AG04449 (cell line): ENCODE measurements at regions of chr10 and their contacts with region 1.

Region 1: GRCh38 chr10:89793649-89794254 is 92.4 kb downstream of the KIF20B start:
- DNase-seq: peak; percentile 19
- H3K4me3 ChIP-seq: no peak overlapping the region
- CTCF ChIP-seq: peak; percentile 62

Region 2: DNA sequence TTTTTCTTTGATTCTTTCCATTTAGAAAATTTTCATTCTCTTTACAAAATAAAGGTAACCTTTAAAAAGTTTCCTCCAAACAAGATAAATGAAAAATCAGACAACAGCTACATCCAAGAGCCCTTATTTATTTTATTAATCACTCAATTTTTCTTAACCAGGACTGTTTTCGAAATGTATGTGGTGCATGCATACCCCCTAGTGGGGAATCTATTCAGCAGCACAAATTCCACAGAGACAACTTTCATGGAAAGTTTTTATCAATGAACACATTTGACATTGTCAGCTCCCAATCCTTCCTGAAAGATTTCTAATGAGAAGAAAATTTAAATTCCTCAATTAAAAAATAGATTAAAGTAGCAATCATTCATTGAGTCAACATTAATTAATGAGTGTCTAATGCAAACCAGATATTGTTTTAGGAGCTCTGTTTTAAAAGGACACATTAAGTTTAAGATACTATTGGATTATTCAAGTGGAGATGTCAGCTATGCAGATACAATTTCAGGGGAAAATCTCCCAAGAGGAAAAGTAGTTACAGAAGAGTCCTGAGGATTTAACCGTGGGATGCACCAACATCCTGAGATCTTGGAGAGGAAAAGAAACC is 1069.3 kb after region 1 on chr10:
- CTCF ChIA-PET with region 1: interaction called, 10 read pairs
- POLR2A ChIA-PET with region 1: interaction called, 3 read pairs
- DNase-seq: no peak
- H3K4me3 ChIP-seq: no peak overlapping the region
- CTCF ChIP-seq: peak; percentile 60